B cell (primary cell): ENCODE measurements at regions of chr7 and their contacts with region 1.

Region 1: DNA sequence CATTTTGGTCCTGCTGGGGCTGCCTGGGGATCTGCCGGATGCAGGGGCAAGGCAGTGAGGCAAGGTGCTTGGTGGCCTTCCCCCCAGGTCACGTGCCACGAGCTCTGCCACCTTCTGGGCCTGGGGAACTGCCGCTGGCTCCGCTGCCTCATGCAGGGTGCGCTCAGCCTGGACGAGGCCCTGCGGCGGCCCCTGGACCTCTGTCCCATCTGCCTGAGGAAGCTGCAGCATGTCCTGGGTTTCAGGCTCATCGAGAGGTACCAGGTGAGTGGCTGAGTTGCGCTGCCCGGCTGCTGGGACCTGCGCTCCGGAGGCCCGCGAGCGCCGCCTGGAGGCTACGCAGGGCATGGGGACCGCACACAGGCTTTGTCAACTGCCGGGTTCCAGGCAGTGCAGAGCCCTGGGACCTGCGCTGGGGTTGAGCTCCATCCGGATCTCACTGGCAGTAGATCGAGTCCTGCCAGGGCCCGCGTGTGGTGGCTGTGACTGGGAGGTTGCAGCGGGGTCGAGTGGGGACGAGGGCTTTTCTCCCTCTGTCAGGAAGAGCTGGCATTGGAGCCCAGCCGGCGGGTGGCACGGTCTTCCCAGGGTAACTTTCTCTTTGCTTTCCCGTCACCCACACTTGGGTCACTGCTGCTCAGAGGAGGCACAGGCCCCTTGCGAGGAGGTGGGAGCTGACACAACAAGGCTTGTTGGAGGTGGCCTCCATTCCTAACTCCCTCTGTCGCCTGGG is 21.7 kb downstream of the AMZ1 start:
- DNase-seq: peak; percentile 91
- ATAC-seq: peak; percentile 74
- H3K4me3 ChIP-seq: peak overlapping the region in 4 of 5 experiments; percentile 44 to 77 (median 60)
- H3K4me3 Mint-ChIP-seq: peak overlapping the region; percentile 92
- H3K27ac ChIP-seq: peak overlapping the region; percentile 93 to 95
- H3K27ac Mint-ChIP-seq: peak overlapping the region; percentile 97
- H3K4me1 ChIP-seq: peaks cover 30 to 45% of the 10 kb centered on the region in 2 donors
- H3K4me1 Mint-ChIP-seq: peaks cover 47% of the 10 kb centered on the region
- H3K27me3 ChIP-seq: no peaks in the 10 kb centered on the region
- H3K27me3 Mint-ChIP-seq: no peaks in the 10 kb centered on the region
- CTCF ChIP-seq: peak; percentile 94

Region 2: DNA sequence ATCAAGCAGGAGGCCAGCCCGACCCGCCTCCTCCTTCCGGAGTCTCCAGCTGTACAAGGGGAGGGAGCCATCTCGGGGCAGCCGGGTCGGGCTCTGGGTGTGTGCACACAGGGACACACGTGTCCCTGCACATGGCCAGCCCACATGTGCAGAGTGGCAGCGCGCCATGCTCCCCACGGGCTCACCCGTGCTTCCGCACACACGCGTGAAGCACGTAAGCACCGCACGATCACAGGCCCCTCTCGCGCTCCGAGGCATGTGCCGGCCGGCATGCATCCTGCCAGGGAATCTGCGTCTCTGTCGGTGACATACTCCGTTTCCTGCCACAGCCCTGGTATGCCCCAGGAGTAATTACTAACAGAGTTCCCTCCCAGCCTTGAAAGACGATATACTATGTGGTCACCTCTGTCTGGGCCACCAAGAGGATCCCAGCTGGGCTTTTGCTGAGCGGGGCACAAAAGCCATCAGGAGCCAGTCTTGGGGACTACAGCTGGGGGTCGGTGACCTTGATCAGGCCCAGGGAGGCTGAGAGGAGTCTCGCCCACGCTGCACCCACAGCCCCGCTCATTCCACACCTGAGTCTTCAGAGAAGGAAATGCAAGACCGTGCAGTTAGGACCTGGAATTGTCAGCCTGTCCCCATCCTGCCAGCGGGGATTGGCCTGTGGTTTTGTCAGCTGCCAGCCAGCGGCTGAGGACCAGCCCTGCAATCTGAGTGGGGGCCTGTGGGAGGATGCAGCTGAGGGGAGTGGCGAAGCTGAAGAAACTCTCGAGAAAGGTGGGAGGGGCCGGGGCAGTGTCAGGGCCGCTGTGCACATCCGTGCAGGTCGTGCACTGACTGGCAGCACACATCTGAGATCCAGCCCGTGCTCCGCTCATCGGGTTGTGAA is 201.1 kb before region 1 on chr7:
- CTCF ChIA-PET with region 1: interaction called, 13 read pairs
- POLR2A ChIA-PET with region 1: interaction called, 8 read pairs
- intact Hi-C with region 1: no loop called
- DNase-seq: peak; percentile 90
- ATAC-seq: peak; percentile 48
- H3K4me3 ChIP-seq: peak overlapping the region in 4 of 5 experiments; percentile 25 to 46 (median 34)
- H3K4me3 Mint-ChIP-seq: peak overlapping the region; percentile 88
- H3K27ac ChIP-seq: peak overlapping the region; percentile 99 to 100
- H3K27ac Mint-ChIP-seq: peak overlapping the region; percentile 99
- H3K4me1 ChIP-seq: peaks cover 58 to 63% of the 10 kb centered on the region in 2 donors
- H3K4me1 Mint-ChIP-seq: peaks cover 67% of the 10 kb centered on the region
- H3K27me3 ChIP-seq: no peaks in the 10 kb centered on the region
- H3K27me3 Mint-ChIP-seq: no peaks in the 10 kb centered on the region
- CTCF ChIP-seq: no peak

Region 3: DNA sequence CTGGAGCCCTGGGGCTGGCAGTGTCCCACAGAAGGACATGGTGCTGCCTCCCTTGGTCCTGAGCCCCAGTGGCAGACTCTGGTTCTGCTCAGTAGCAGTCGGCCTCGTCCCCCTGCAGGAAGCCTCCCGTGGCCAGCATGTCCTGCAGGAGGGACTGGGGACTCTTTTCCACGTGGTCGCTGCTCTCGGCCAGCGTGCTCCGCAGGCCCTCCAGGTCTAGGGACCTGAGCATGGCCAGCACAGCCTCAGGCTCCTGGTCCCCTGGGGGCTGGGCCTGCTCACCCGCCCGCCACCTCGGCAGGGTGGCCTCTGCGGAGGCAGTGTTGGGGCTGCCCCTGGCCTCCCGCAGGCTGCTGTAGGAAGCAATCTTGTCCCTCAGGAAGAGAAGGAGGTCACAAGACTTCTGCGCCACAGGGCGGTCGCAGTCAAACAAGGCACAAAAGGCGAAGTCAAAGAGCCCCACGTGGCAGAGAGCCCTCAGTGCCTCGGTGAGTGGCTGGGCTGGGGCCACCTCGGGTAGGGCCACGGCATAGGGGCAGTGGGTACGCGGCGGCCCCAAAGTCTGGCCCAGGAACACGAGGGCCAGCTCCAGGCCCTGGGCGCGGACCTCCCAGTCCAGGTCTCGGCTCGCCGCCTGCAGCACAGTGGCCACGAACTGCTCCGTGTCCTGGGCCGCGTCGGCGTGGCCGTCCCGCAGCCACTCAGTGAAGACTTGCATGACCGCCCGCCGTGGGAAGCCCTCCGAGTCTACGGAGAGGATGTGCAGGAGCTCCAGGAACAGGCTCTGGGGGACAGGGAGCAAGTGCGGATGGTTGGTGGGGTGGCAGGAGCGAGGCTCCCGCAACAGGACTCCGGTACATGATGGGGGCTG is 171.5 kb before region 1 on chr7:
- CTCF ChIA-PET with region 1: no interaction called
- POLR2A ChIA-PET with region 1: no interaction called
- intact Hi-C with region 1: no loop called
- DNase-seq: peak; percentile 29
- ATAC-seq: no peak
- H3K4me3 ChIP-seq: no peak overlapping the region
- H3K4me3 Mint-ChIP-seq: no peak overlapping the region
- H3K27ac ChIP-seq: no peak overlapping the region
- H3K27ac Mint-ChIP-seq: no peak overlapping the region
- H3K4me1 ChIP-seq: no peaks in the 10 kb centered on the region
- H3K4me1 Mint-ChIP-seq: peaks cover 1% of the 10 kb centered on the region
- H3K27me3 ChIP-seq: no peaks in the 10 kb centered on the region
- H3K27me3 Mint-ChIP-seq: no peaks in the 10 kb centered on the region
- CTCF ChIP-seq: no peak

Region 4: GRCh38 chr7:2608921-2609411 is 100.8 kb before region 1 on chr7:
- CTCF ChIA-PET with region 1: interaction called, 19 read pairs
- POLR2A ChIA-PET with region 1: interaction called, 5 read pairs
- intact Hi-C with region 1: no loop called
- DNase-seq: peak; percentile 83
- ATAC-seq: peak; percentile 94
- H3K4me3 ChIP-seq: peak overlapping the region in 4 of 5 experiments; percentile 18 to 48 (median 37)
- H3K4me3 Mint-ChIP-seq: peak overlapping the region; percentile 87
- H3K27ac ChIP-seq: peak overlapping the region in 1 of 2 donors; percentile 42
- H3K27ac Mint-ChIP-seq: peak overlapping the region; percentile 88
- H3K4me1 ChIP-seq: peaks cover 15 to 25% of the 10 kb centered on the region in 2 donors
- H3K4me1 Mint-ChIP-seq: peaks cover 25% of the 10 kb centered on the region
- H3K27me3 ChIP-seq: no peaks in the 10 kb centered on the region
- H3K27me3 Mint-ChIP-seq: no peaks in the 10 kb centered on the region
- CTCF ChIP-seq: peak; percentile 57

Region 5: GRCh38 chr7:2688409-2689331 is 21.0 kb before region 1 on chr7:
- CTCF ChIA-PET with region 1: interaction called, 50 read pairs
- POLR2A ChIA-PET with region 1: interaction called, 7 read pairs
- intact Hi-C with region 1: no loop called
- DNase-seq: peak; percentile 40
- ATAC-seq: peak; percentile 31
- H3K4me3 ChIP-seq: peak overlapping the region in 2 of 5 experiments; percentile 14 to 15
- H3K4me3 Mint-ChIP-seq: peak overlapping the region; percentile 76
- H3K27ac ChIP-seq: no peak overlapping the region
- H3K27ac Mint-ChIP-seq: no peak overlapping the region
- H3K4me1 ChIP-seq: peaks cover 17 to 18% of the 10 kb centered on the region in 2 donors
- H3K4me1 Mint-ChIP-seq: peaks cover 11% of the 10 kb centered on the region
- H3K27me3 ChIP-seq: peaks cover 0 to 44% (median 22%) of the 10 kb centered on the region in 4 experiments
- H3K27me3 Mint-ChIP-seq: peaks cover 34% of the 10 kb centered on the region
- CTCF ChIP-seq: no peak

Region 6: GRCh38 chr7:2757904-2758672 is 48.4 kb after region 1 on chr7:
- CTCF ChIA-PET with region 1: interaction called, 18 read pairs
- POLR2A ChIA-PET with region 1: no interaction called
- intact Hi-C with region 1: no loop called
- DNase-seq: no peak
- ATAC-seq: peak; percentile 73
- H3K4me3 ChIP-seq: no peak overlapping the region
- H3K4me3 Mint-ChIP-seq: peak overlapping the region; percentile 63
- H3K27ac ChIP-seq: peak overlapping the region in 1 of 2 donors; percentile 11
- H3K27ac Mint-ChIP-seq: peak overlapping the region; percentile 89
- H3K4me1 ChIP-seq: peaks cover 7 to 10% of the 10 kb centered on the region in 2 donors
- H3K4me1 Mint-ChIP-seq: peaks cover 37% of the 10 kb centered on the region
- H3K27me3 ChIP-seq: no peaks in the 10 kb centered on the region
- H3K27me3 Mint-ChIP-seq: no peaks in the 10 kb centered on the region
- CTCF ChIP-seq: no peak